Transverse colon (tissue), 4 donors: ENCODE measurements at regions of chr19 and their contacts with region 1.

Region 1: DNA sequence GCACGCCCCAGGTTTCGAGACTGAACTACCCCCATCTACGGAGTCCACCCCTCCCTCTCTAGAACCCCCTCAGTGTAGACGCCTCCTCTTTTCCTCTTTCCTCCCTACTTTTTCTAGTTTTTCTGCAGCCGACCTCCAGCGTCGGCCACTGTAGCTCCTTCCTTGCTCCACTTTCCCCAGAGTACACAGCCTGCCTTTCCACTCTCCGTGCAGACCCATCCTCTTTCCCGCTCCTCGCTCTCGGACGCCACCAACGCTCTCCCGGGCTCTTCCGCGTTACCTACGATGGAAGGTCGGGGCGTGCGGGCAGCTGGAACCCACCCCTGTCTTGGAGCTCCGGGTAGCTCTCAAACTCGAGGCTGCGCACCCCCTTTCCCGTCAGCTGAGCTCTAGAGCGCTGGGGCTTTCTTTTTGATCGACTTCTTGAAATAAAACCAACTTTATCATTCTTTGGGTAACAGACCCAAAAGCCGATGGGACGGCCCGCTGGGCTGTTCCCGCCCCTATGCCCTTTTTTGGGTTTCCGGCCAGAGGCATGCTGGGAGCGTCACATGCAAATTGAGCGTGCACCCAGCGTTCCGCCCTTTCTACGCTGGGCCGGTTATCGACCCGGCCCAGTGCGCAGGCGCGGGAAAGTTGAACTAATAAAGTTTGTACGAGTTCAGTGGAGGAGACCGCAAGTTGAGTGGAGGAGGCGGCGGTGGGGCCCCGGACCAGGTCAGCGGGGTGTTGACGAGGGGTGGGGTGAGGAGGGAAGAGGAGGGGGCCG is at the starts of genes BCL2L12 and IRF3:
- DNase-seq: peak; percentile 99
- H3K4me3 ChIP-seq: peak within 1 kb of the TSS; percentile 63 to 93 (median 80)
- H3K27ac ChIP-seq: peak within 1 kb of the TSS; percentile 88 to 100 (median 95)
- H3K4me1 ChIP-seq: peaks cover 7 to 25% (median 22%) of the 10 kb centered on the region in 4 donors
- H3K27me3 ChIP-seq: no peaks in the 10 kb centered on the region
- CTCF ChIP-seq: no peak
- EP300 ChIP-seq: no peak
- POLR2A ChIP-seq: peak; percentile 82
- total RNA-seq, gene BCL2L12: 5.4 to 10.2 (median 6.9) TPM
- total RNA-seq, gene IRF3: 73.0 to 164 (median 104) TPM

Region 2: DNA sequence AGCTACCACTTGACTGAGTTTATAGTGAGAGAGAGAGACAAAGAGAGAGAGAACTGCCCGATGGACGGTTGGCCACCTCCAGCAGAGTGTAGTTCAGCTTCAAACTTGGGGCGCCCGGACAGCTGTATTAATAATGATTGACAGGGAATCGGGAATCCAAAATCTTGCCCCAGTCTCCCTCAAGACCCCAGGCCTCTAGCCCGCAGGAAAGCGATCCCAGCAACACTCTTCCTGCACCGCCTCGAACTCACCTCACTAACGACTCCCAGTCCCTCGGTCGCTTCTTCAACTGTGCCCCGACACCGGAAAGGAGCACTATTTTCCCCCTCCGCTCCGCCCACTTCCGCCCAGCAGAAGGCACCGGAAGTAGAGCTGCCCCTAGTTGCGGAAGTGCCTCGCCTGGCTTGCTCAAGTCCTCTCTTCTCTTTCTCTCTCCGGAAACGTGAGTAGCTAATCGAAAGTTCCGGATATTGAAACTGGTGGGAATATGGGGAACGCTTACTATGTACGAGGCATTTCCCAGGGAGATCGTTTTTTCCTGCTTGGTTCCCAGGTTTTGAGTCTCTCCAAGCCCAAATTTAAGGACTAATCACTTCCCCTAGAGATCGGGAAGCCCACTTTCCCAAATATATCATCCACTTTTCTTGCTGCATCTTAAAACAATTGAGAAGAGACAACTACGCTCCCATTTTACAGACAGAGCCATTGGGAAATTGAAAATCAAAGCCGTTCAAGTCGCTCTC is 85.1 kb before region 1 on chr19 and contains the start of gene NOSIP:
- in situ Hi-C with region 1: loop called in 2 of 4 experiments (anchors 10 kb)
- intact Hi-C with region 1: no loop called
- DNase-seq: peak; percentile 98
- H3K4me3 ChIP-seq: peak within 1 kb of the TSS; percentile 52 to 86 (median 66)
- H3K27ac ChIP-seq: peak within 1 kb of the TSS; percentile 74 to 86 (median 84)
- H3K4me1 ChIP-seq: peaks cover 9 to 26% (median 15%) of the 10 kb centered on the region in 4 donors
- H3K27me3 ChIP-seq: no peaks in the 10 kb centered on the region
- CTCF ChIP-seq: no peak
- EP300 ChIP-seq: no peak
- POLR2A ChIP-seq: peak; percentile 95
- total RNA-seq, gene NOSIP: 56.5 to 105 (median 74.4) TPM

Region 3: DNA sequence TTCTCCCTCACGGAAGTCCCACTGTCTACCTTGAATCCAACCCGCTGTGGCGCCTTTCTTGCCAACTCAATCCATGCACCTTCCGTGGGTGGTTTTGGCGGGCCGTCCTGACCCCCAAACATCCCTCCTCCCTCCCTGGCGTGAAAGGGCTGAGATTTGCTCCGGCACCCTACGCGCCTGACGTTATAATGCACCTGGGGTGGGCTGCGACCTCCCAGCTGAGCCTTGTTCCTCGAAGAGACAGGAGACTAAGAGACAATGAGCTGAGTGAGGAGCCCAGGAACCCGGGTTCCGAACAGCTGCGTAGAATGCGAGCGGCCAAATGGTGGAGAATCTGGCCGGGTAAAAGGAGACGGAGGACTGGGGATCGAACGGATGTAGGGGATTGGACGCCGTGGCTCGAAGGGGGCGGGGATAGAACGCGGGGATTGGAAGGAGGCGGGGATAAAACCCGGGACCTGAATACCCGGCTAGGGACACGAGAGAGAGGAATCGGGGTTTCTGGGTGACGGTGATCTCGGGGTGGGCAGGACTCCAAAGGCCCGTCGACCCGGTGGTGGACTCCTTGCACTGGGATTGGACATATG is 25.2 kb after region 1 on chr19 and contains the start of gene CPT1C:
- in situ Hi-C with region 1: no loop called
- intact Hi-C with region 1: no loop called
- DNase-seq: peak; percentile 75
- H3K4me3 ChIP-seq: peak within 1 kb of the TSS; percentile 20 to 54 (median 37)
- H3K27ac ChIP-seq: peak within 1 kb of the TSS; percentile 38 to 73 (median 61)
- H3K4me1 ChIP-seq: peaks cover 11 to 26% (median 20%) of the 10 kb centered on the region in 4 donors
- H3K27me3 ChIP-seq: peaks cover 42% of the 10 kb centered on the region
- CTCF ChIP-seq: no peak
- EP300 ChIP-seq: no peak
- POLR2A ChIP-seq: peak; percentile 42
- total RNA-seq, gene CPT1C: 1.5 to 10.9 (median 2.2) TPM